Lower leg skin (tissue), 4 donors: ENCODE measurements at regions of chr10 and their contacts with region 1.

Region 1: DNA sequence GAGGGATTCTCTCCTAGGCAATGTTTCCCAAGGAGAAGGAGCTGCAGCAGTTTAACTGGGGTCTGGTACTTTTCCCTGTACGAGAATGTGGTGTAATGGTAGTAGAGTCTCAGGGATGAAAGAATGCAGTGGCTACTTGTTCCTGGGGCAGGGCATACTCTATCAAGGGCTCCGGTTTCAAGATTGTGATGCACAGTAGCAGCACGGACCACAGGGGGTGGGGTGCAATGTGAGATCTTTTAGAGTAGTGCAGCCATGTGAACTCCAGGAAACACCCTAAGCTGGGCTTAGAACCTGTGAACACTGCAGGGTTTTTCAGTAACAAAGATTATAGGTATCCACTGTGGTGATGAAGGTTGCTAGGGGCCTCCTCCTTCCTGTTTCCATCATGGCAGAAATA is 903.9 kb downstream of the NRG3 start:
- DNase-seq: no peak
- H3K4me3 ChIP-seq: no peak overlapping the region
- CTCF ChIP-seq: no peak
- POLR2A ChIP-seq: no peak

Region 2: GRCh38 chr10:82768040-82768439 is 10.9 kb before region 1 on chr10:
- intact Hi-C with region 1: loop called (anchors 1 kb)
- DNase-seq: no peak
- H3K4me3 ChIP-seq: no peak overlapping the region
- CTCF ChIP-seq: no peak
- POLR2A ChIP-seq: no peak

Region 3: DNA sequence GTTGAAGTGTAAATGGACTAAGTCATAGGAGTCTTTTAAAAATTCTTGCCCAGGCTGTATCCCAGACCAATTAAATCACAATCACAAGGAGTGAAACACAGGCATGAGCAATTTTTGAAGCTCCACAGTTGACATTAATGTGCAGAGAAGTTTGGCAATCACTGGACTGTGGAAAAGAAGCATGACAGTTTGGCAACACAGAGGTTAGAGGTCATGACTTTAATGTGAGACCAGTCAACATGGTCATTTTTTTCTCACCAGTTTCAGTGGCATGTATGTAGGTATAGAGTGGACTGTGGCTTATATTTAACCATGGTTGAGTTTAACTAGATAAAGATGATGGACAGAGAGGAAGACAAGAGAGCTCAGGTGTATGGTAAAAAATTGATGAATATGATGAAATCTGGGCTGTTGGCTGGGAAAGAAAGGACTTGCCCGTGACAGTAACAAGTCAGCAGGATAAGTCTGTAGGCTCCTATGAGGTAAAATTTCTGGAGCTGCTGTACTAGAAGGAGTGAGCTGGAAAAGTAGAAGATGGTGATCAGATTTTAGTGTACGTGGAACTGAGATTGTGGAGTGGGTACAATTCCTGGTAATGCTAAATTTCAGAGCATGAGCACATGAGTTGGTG is 928.2 kb after region 1 on chr10:
- intact Hi-C with region 1: no loop called
- DNase-seq: no peak
- H3K4me3 ChIP-seq: no peak overlapping the region
- CTCF ChIP-seq: no peak
- POLR2A ChIP-seq: no peak